Activated CD4-positive, alpha-beta T cell treated with anti-CD3 and anti-CD28 coated beads, Interleukin-2, amount 10 ng/mL, durations not matched to agents 24 days and 14 days (primary cell): ENCODE measurements at regions of chr18 and their contacts with region 1.

Region 1: DNA sequence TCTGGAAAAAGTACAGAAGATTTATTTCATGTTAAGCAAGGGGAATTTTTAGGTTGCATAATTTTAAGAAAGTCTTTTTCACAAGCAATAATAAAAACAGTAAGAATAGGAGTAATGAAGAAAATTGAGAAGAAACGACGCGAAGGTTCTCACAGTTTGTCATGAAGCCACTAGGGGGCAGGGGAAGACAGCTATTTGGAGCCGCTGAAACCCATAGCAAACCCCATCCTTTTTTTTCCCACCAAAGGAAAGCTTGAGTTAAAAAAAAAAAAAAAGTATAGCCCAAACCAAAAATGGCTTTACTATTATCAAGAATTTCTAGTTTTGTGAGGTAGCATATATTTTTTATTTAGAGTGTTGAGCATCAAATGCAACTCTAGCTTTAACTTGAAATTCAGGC is 300.9 kb downstream of the PHLPP1 start:
- DNase-seq: peak; percentile 83
- H3K4me3 Mint-ChIP-seq: no peak overlapping the region
- H3K27ac Mint-ChIP-seq: no peak overlapping the region
- H3K4me1 Mint-ChIP-seq: no peaks in the 10 kb centered on the region
- H3K27me3 Mint-ChIP-seq: peaks cover 59% of the 10 kb centered on the region

Region 2: DNA sequence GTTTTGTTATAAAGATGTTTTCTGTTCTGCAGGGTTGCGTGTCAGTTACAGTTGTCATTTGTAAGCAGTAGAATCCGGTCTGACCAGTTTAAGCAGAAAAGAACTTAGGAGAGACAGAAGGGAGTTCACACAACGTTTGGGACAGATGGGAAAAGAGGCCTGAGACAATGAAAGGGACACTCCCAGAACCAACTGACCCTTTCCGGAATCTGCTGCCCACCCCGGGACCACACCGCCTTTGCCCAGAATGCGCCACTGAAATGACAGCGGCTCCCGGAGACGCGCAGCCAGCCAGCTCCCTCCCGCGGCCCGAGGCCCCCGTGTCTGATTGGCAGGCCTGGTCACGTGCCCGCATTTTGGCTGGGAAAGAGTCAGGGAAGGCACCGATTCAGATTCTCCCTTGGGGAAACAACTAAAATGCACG is 58.7 kb after region 1 on chr18:
- intact Hi-C with region 1: loop called (anchors 1 kb)
- DNase-seq: peak; percentile 87
- H3K4me3 Mint-ChIP-seq: peak overlapping the region; percentile 84
- H3K27ac Mint-ChIP-seq: peak overlapping the region; percentile 30
- H3K4me1 Mint-ChIP-seq: peaks cover 11% of the 10 kb centered on the region
- H3K27me3 Mint-ChIP-seq: peaks cover 25% of the 10 kb centered on the region

Region 3: DNA sequence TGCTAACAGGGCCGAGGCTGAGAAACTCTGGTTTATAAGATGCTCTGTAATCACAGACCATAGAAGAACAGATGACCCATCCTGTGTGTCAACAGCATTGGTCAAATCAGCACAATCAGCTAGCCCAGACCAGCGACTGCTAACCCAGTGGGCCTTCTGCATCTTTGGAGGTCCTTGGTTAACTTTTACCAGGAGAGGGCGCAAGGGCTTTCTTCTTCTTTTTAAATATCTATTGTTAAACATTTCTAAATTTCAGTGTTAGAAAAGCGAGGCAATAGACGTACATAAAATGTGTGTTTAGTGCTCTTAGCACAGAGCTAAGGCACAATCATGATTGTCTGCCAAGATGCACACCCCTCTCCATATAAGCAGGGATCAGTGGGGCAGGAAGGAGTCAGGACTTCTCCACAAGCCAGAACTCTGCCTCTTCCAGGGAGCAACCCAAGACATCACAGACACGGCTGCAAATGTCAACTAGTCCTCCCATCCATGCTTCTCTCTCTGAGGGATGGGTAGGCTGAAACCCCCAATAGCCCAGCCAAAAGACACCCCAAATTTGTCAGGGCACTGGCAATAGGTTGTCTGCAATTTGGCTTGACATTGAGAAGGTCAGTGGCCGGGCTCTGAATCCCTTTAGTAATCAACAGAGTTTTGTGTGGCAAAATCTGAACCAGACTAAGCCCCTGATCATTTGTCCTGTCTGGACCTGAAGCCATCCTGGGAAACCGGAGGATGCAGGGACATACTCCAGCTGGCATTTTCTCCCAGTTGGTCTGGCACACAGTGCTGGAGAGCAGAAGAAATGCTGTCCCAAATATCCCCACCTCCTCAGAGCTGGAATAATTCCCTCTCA is 115.1 kb after region 1 on chr18:
- intact Hi-C with region 1: loop called (anchors 5 kb)
- DNase-seq: peak; percentile 86
- H3K4me3 Mint-ChIP-seq: no peak overlapping the region
- H3K27ac Mint-ChIP-seq: peak overlapping the region; percentile 21
- H3K4me1 Mint-ChIP-seq: peaks cover 41% of the 10 kb centered on the region
- H3K27me3 Mint-ChIP-seq: no peaks in the 10 kb centered on the region

Region 4: DNA sequence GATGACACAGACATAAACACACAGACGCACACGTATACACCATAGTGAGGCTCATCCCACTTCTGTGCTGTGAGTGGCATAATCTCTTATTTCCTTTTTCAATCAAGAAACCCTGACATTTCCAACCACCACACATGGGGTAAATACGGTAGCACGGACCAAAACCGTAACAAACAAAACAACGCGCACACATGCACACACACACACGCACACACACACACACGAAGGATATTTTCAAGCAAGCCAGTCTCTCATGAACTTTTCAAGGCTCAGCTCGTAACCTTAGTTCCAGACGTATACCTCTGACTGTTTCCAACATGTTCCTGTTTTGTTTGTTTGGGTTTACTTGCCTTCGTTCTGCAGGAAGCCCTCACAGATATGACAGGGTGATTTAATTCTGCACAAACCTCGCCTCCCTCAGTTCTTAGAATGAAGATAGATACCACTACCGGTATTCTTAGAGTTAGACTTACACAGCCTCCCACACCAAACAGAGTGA is 183.5 kb after region 1 on chr18:
- intact Hi-C with region 1: loop called (anchors 2 kb)
- DNase-seq: peak; percentile 90
- H3K4me3 Mint-ChIP-seq: no peak overlapping the region
- H3K27ac Mint-ChIP-seq: no peak overlapping the region
- H3K4me1 Mint-ChIP-seq: peaks cover 31% of the 10 kb centered on the region
- H3K27me3 Mint-ChIP-seq: no peaks in the 10 kb centered on the region

Region 5: DNA sequence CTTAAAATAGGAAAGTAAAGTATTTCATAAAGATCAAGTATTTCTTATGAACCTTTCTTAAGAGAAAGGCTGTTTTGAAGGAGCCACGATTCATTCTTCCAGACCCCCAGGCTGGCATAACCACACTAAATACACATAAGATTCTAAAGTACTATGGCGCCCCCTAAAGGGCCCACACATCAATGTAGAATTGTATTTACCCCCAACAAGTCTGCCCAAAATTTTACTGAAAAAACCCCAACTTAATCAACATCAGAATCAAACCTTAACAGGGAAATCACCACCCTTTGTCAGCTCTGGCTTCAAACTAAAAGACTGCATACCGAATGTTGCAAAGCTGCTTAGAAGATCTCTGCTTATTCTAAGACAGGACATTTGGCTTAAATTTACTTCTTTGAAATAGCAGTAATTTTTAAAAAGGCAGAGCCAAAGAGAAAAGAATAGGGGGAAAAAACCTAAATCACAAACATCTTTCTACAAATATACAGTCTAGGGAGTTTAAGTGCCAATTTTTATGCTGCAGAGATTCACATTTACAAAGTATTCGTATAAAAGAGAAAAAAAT is 323.7 kb after region 1 on chr18:
- intact Hi-C with region 1: loop called (anchors 5 kb)
- DNase-seq: peak; percentile 81
- H3K4me3 Mint-ChIP-seq: no peak overlapping the region
- H3K27ac Mint-ChIP-seq: peak overlapping the region; percentile 2
- H3K4me1 Mint-ChIP-seq: peaks cover 11% of the 10 kb centered on the region
- H3K27me3 Mint-ChIP-seq: no peaks in the 10 kb centered on the region

Region 6: GRCh38 chr18:63439334-63439733 is 423.1 kb after region 1 on chr18:
- intact Hi-C with region 1: loop called (anchors 1 kb)
- DNase-seq: peak; percentile 85
- H3K4me3 Mint-ChIP-seq: no peak overlapping the region
- H3K27ac Mint-ChIP-seq: no peak overlapping the region
- H3K4me1 Mint-ChIP-seq: no peaks in the 10 kb centered on the region
- H3K27me3 Mint-ChIP-seq: peaks cover 29% of the 10 kb centered on the region